ENCODE measurements at regions of chr2 and their contacts with region 1.

Region 1: DNA sequence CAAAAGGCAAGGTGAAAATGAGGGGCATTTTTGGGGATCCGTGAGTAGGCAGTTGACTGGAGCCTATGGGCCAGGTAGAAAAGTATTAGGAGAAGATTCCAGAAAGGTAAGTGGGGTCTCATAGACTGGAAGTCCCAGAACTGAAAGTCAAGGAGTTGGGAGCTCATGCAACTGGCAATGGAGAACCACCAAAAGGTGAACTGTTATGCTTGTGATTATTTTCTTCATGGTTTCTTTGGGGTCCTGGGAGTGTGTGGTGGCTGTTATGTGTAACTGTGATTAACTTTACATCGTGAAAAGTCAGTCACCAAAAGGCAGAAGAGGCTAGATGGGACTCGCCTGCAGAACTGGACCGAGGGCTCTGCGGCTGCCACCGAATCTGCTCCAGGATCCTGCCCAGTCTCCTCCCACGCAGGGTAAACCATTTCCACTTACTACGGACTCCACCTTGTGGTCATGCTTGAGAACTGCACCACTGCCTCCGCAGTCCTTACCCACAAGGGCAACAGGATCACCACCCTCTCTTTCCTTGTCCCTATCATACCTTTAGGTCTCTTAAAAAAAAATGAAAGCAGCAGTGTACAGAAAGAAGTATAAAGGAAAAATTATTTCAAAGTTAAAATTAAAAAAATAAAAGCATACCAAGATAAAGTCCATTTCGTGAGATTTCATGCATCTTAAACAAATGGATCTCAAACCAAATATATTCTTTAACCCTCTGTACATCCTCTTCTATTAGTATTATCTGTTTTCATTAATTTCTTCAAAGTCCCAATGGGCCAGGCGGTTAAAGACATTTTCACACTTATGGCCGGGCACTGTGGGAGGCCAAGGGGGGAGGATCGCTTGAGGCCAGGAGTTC is 15.6 kb upstream of the CEP68 start:
- DNase-seq: peak; percentile 59
- ATAC-seq: peak; percentile 99
- H3K4me3 Mint-ChIP-seq: no peak overlapping the region
- H3K27ac Mint-ChIP-seq: peak overlapping the region; percentile 20
- H3K4me1 Mint-ChIP-seq: peaks cover 11% of the 10 kb centered on the region
- H3K27me3 Mint-ChIP-seq: no peaks in the 10 kb centered on the region
- CTCF ChIP-seq: peak; percentile 55

Region 2: GRCh38 chr2:64873472-64873924 is 167.1 kb before region 1 on chr2:
- CTCF ChIA-PET with region 1: no interaction called
- POLR2A ChIA-PET with region 1: no interaction called
- intact Hi-C with region 1: loop called (anchors 1 kb)
- DNase-seq: peak; percentile 86
- ATAC-seq: peak; percentile 99
- H3K4me3 Mint-ChIP-seq: peak overlapping the region; percentile 52
- H3K27ac Mint-ChIP-seq: no peak overlapping the region
- H3K4me1 Mint-ChIP-seq: peaks cover 8% of the 10 kb centered on the region
- H3K27me3 Mint-ChIP-seq: no peaks in the 10 kb centered on the region
- CTCF ChIP-seq: peak; percentile 90

Region 3: GRCh38 chr2:64998658-64999061 is 42.0 kb before region 1 on chr2:
- CTCF ChIA-PET with region 1: no interaction called
- POLR2A ChIA-PET with region 1: no interaction called
- intact Hi-C with region 1: no loop called
- DNase-seq: no peak
- ATAC-seq: no peak
- H3K4me3 Mint-ChIP-seq: no peak overlapping the region
- H3K27ac Mint-ChIP-seq: no peak overlapping the region
- H3K4me1 Mint-ChIP-seq: no peaks in the 10 kb centered on the region
- H3K27me3 Mint-ChIP-seq: no peaks in the 10 kb centered on the region
- CTCF ChIP-seq: no peak

Region 4: GRCh38 chr2:65017335-65017734 is 23.3 kb before region 1 on chr2:
- CTCF ChIA-PET with region 1: interaction called, 7 read pairs
- POLR2A ChIA-PET with region 1: interaction called, 4 read pairs
- intact Hi-C with region 1: loop called (anchors 1 kb)
- DNase-seq: no peak
- ATAC-seq: peak; percentile 78
- H3K4me3 Mint-ChIP-seq: peak overlapping the region; percentile 55
- H3K27ac Mint-ChIP-seq: peak overlapping the region; percentile 71
- H3K4me1 Mint-ChIP-seq: peaks cover 44% of the 10 kb centered on the region
- H3K27me3 Mint-ChIP-seq: no peaks in the 10 kb centered on the region
- CTCF ChIP-seq: no peak

Region 5: GRCh38 chr2:65024149-65024829 is 16.3 kb before region 1 on chr2:
- CTCF ChIA-PET with region 1: interaction called, 4 read pairs
- POLR2A ChIA-PET with region 1: no interaction called
- intact Hi-C with region 1: loop called (anchors 1 kb)
- DNase-seq: no peak
- ATAC-seq: no peak
- H3K4me3 Mint-ChIP-seq: peak overlapping the region; percentile 29
- H3K27ac Mint-ChIP-seq: peak overlapping the region; percentile 63
- H3K4me1 Mint-ChIP-seq: peaks cover 58% of the 10 kb centered on the region
- H3K27me3 Mint-ChIP-seq: no peaks in the 10 kb centered on the region
- CTCF ChIP-seq: no peak

Region 6: GRCh38 chr2:66070721-66071602 is 1030.3 kb after region 1 on chr2:
- CTCF ChIA-PET with region 1: no interaction called
- POLR2A ChIA-PET with region 1: no interaction called
- intact Hi-C with region 1: no loop called
- DNase-seq: no peak
- ATAC-seq: no peak
- H3K4me3 Mint-ChIP-seq: no peak overlapping the region
- H3K27ac Mint-ChIP-seq: no peak overlapping the region
- H3K4me1 Mint-ChIP-seq: no peaks in the 10 kb centered on the region
- H3K27me3 Mint-ChIP-seq: no peaks in the 10 kb centered on the region
- CTCF ChIP-seq: no peak